ENCODE measurements at regions of chr12 and their contacts with region 1.

Region 1: GRCh38 chr12:26396402-26396801 is 201.0 kb downstream of the SSPN start:
- DNase-seq: no peak
- ATAC-seq: no peak
- H3K4me3 Mint-ChIP-seq: no peak overlapping the region
- H3K27ac Mint-ChIP-seq: no peak overlapping the region
- H3K4me1 Mint-ChIP-seq: no peaks in the 10 kb centered on the region
- H3K27me3 Mint-ChIP-seq: no peaks in the 10 kb centered on the region
- CTCF ChIP-seq: no peak

Region 2: DNA sequence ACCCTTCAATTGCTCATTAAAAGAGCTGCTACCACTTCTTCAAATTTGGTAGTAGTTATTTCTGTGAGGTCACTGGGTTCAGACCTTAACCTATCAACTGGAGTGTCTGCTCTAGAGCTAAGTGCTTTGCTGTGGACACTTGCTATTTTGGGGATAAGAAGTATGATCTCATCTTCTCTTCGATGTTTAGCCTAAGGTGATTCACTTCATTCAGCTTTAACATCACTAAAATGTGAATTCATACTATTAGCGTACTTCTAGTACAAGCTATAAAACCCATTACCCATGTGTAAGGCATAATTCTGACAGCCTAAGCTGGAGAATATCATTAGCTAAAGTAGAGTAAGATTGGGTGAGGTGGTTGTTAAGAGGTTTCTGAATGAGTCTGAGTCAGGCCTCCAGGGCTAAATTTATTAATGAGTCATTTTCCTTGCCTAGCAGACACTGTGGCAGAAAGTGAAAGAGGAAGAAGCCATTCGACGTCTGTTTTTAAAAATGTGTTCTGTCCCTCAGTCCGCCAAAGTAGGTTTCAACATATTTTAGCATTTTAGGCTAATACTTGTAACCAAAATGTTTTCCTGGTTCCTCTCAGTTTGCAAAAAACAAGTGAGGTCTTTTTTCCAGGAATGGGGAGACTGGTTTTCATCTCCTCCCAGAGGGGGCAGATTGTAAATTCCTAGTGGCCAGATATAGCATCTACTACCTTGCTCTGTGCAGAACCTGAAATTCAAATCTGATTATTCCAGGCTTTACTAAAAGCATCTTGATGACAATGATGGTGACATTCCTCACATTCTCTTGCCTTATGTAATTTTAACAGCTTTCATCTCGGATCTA is 97.4 kb before region 1 on chr12:
- CTCF ChIA-PET with region 1: no interaction called
- POLR2A ChIA-PET with region 1: interaction called, 11 read pairs
- DNase-seq: no peak
- ATAC-seq: no peak
- H3K4me3 Mint-ChIP-seq: no peak overlapping the region
- H3K27ac Mint-ChIP-seq: no peak overlapping the region
- H3K4me1 Mint-ChIP-seq: no peaks in the 10 kb centered on the region
- H3K27me3 Mint-ChIP-seq: no peaks in the 10 kb centered on the region
- CTCF ChIP-seq: no peak

Region 3: GRCh38 chr12:26443309-26443708 is 46.9 kb after region 1 on chr12:
- CTCF ChIA-PET with region 1: no interaction called
- POLR2A ChIA-PET with region 1: no interaction called
- DNase-seq: no peak
- ATAC-seq: no peak
- H3K4me3 Mint-ChIP-seq: no peak overlapping the region
- H3K27ac Mint-ChIP-seq: no peak overlapping the region
- H3K4me1 Mint-ChIP-seq: peaks cover 11% of the 10 kb centered on the region
- H3K27me3 Mint-ChIP-seq: no peaks in the 10 kb centered on the region
- CTCF ChIP-seq: no peak

Measured in WTC11 (cell line).